Lower leg skin (tissue), 4 donors: ENCODE measurements at regions of chr19 and their contacts with region 1.

Region 1: GRCh38 chr19:9986787-9987281 is 23.5 kb downstream of the COL5A3 start:
- DNase-seq: peak in 1 of 2 donors; percentile 47
- H3K4me3 ChIP-seq: no peak overlapping the region
- CTCF ChIP-seq: no peak
- POLR2A ChIP-seq: no peak

Region 2: GRCh38 chr19:9128171-9128570 is 858.7 kb before region 1 on chr19:
- intact Hi-C with region 1: loop called (anchors 5 kb)
- DNase-seq: no peak
- H3K4me3 ChIP-seq: no peak overlapping the region
- CTCF ChIP-seq: no peak
- POLR2A ChIP-seq: no peak

Region 3: GRCh38 chr19:9891609-9892373 is 95.0 kb before region 1 on chr19:
- intact Hi-C with region 1: no loop called
- DNase-seq: no peak
- H3K4me3 ChIP-seq: no peak overlapping the region
- CTCF ChIP-seq: no peak
- POLR2A ChIP-seq: no peak

Region 4: DNA sequence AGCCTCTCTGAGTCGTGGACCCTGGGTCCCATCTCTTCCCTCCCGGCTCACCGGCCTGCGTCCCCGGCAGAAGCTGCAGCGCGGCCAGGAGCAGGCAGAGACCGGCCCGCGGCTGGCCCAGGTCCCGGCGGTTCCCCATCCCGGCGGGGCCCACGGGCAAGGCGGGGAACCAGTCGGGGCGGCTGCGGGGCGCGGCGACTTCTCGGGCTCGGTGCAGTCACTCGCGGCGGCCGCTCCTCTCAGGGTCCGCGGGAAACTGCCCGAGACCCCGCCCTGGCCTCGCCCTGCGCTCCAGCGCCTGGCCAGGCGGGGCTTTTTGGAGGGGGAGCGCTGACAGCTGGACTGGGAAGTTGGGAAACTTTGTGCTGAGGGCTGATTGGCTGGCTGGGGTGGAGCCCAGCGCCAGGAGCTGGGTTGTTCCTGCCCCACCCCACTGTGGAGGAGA is 23.4 kb after region 1 on chr19 and contains the start of gene COL5A3:
- intact Hi-C with region 1: no loop called
- DNase-seq: peak; percentile 62 to 91
- H3K4me3 ChIP-seq: peak within 1 kb of the TSS; percentile 14
- CTCF ChIP-seq: no peak
- POLR2A ChIP-seq: no peak
- total RNA-seq, gene COL5A3: 11.9 to 31.9 (median 20.7) TPM

Region 5: GRCh38 chr19:10061717-10062310 is 75.0 kb after region 1 on chr19:
- intact Hi-C with region 1: no loop called
- DNase-seq: no peak
- H3K4me3 ChIP-seq: no peak overlapping the region
- CTCF ChIP-seq: no peak
- POLR2A ChIP-seq: no peak